Activated naive CD4-positive, alpha-beta T cell treated with anti-CD3 and anti-CD28 coated beads for 36 hours (primary cell): ENCODE measurements at regions of chr14 and their contacts with region 1.

Region 1: GRCh38 chr14:65847075-65847847 is 434.7 kb downstream of the FUT8 start:
- DNase-seq: peak; percentile 83
- H3K4me3 Mint-ChIP-seq: no peak overlapping the region
- H3K27ac Mint-ChIP-seq: peak overlapping the region; percentile 71
- H3K4me1 Mint-ChIP-seq: peaks cover 62% of the 10 kb centered on the region
- H3K27me3 Mint-ChIP-seq: no peaks in the 10 kb centered on the region

Region 2: DNA sequence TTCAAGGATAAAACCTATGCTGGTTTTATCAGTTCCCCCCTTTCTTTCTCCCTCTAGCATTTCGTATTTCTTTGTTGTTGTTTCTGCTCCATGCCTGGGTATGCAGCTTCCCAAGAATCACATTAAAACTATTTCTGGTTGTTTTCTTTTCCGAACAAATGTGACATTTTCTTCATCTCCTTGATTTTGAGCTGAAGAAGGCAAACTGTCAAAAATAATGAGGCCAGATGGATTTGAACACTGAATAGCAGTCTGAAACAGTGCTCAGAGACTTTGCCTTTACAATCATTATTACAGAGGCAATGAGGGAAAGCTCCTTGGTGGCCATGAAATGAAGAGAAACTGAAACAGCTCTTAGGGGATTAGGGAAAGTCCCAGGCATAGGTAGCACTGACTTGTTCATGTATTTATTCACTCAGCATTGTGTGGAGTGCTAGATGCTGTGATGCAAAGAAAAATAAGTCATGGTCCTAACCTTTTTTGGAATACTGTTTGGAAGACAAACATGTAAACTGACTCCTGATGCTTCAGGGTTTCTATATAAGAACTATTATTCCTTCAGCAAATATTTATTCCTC is 115.2 kb before region 1 on chr14:
- CTCF ChIA-PET with region 1: no interaction called
- intact Hi-C with region 1: loop called (anchors 1 kb)
- DNase-seq: peak; percentile 23
- H3K4me3 Mint-ChIP-seq: no peak overlapping the region
- H3K27ac Mint-ChIP-seq: no peak overlapping the region
- H3K4me1 Mint-ChIP-seq: peaks cover 14% of the 10 kb centered on the region
- H3K27me3 Mint-ChIP-seq: no peaks in the 10 kb centered on the region

Region 3: GRCh38 chr14:65804752-65805473 is 42.3 kb before region 1 on chr14:
- CTCF ChIA-PET with region 1: no interaction called
- intact Hi-C with region 1: loop called (anchors 1 kb)
- DNase-seq: no peak
- H3K4me3 Mint-ChIP-seq: no peak overlapping the region
- H3K27ac Mint-ChIP-seq: no peak overlapping the region
- H3K4me1 Mint-ChIP-seq: peaks cover 4% of the 10 kb centered on the region
- H3K27me3 Mint-ChIP-seq: no peaks in the 10 kb centered on the region

Region 4: DNA sequence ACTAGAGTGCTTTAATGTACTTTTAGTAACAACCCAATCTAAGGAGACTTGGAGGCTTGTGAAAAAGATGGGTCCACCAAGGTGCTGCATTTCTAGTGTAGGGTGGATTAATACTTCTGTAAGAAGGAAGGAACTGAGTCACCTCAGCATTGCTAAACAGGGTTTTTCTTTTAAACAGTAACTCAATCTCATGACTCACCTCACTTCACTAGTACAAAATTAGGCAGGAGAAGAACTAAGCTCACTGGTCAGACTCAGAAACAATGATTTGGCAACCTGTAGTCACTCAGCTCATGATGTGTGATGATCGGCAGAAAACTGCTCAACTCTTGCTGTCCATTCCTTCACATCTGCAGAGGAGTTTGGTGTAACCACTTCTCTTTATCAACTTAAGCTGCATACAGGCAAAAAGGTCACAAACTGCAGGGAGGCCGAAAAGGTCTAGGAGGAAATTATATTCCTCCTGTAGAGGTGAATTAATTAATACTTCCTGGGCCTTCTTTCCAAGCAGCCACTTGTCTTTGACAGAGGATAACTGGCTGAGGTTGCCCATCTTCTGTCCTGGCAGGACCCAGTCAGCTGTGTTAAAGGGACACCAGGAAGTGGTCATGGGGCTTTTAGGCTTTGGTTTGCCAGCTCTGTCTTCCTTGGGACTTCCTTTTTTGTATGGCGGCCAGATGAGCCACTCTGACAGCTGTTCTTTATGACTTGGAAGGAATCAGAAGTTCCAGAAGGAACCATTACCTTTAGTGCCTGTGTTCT is 32.2 kb after region 1 on chr14:
- CTCF ChIA-PET with region 1: interaction called, 3 read pairs
- intact Hi-C with region 1: loop called (anchors 1 kb)
- DNase-seq: peak; percentile 18
- H3K4me3 Mint-ChIP-seq: no peak overlapping the region
- H3K27ac Mint-ChIP-seq: peak overlapping the region; percentile 48
- H3K4me1 Mint-ChIP-seq: peaks cover 31% of the 10 kb centered on the region
- H3K27me3 Mint-ChIP-seq: no peaks in the 10 kb centered on the region

Region 5: DNA sequence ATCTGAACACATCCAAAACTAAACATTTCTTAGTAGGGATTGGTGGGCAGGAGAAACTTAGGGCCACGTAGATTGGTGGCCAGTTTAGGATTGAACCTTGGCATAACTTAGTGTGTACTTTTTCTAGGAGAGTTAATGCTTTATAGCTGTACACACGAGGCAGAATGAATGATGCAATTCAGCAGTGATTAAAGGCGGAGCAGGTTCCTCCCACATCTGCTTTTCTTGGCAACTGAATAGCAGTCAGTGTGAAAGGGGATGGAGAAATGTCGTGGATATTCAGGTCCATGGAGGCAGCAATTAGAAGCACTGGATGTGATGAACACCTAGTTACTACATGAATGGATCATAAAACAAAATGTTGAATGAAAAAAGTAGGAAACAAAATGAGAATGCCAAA is 59.1 kb after region 1 on chr14:
- CTCF ChIA-PET with region 1: no interaction called
- intact Hi-C with region 1: no loop called
- DNase-seq: no peak
- H3K4me3 Mint-ChIP-seq: no peak overlapping the region
- H3K27ac Mint-ChIP-seq: no peak overlapping the region
- H3K4me1 Mint-ChIP-seq: peaks cover 10% of the 10 kb centered on the region
- H3K27me3 Mint-ChIP-seq: no peaks in the 10 kb centered on the region

Region 6: DNA sequence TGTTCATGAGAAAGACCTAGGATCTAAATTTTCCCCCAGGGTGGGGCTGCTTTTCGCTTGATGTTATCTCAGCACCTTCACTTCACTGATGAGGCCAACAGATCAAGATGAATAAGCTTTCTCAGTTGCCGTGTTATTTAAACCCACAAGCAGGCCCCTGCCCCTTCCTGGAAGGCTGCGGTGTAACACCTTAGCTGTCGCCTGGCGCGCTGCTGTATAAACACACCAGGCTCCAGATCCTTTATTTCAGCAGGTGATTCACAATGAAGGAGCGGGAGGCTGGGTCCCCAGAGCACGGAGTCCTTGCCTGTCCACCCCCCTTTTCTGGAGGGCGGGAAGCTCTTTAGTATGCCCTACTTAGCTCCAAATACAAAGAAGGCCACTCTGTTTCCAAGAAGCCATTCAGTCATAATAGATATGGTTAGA is 80.7 kb after region 1 on chr14:
- CTCF ChIA-PET with region 1: interaction called, 4 read pairs
- intact Hi-C with region 1: loop called (anchors 1 kb)
- DNase-seq: peak; percentile 96
- H3K4me3 Mint-ChIP-seq: no peak overlapping the region
- H3K27ac Mint-ChIP-seq: peak overlapping the region; percentile 22
- H3K4me1 Mint-ChIP-seq: peaks cover 41% of the 10 kb centered on the region
- H3K27me3 Mint-ChIP-seq: no peaks in the 10 kb centered on the region

Region 7: GRCh38 chr14:65949711-65950516 is 102.7 kb after region 1 on chr14:
- CTCF ChIA-PET with region 1: interaction called, 5 read pairs
- intact Hi-C with region 1: loop called (anchors 1 kb)
- DNase-seq: peak; percentile 59
- H3K4me3 Mint-ChIP-seq: no peak overlapping the region
- H3K27ac Mint-ChIP-seq: peak overlapping the region; percentile 37
- H3K4me1 Mint-ChIP-seq: peaks cover 28% of the 10 kb centered on the region
- H3K27me3 Mint-ChIP-seq: peaks cover 5% of the 10 kb centered on the region

Region 8: DNA sequence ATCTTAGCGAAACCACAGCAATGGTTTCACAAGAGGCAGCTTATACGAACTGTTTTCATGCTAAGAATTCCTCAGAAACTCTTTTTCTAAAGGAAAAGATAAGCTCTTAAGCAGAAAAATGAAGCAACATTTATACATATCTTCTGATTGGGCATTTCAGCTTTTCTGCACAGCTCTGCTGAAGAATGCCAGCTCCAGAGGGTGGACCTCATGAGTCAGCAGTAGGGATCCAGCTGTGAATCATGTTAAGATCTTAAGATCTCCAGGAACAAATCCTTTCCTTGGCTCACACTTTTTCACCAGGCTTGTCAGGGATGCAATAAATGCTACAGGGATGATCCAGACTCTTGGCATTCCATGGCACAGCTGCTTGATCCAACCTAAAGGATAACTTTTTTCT is 161.8 kb after region 1 on chr14:
- CTCF ChIA-PET with region 1: no interaction called
- intact Hi-C with region 1: no loop called
- DNase-seq: no peak
- H3K4me3 Mint-ChIP-seq: no peak overlapping the region
- H3K27ac Mint-ChIP-seq: no peak overlapping the region
- H3K4me1 Mint-ChIP-seq: peaks cover 4% of the 10 kb centered on the region
- H3K27me3 Mint-ChIP-seq: no peaks in the 10 kb centered on the region